ENCODE measurements at regions of chr15 and their contacts with region 1.

Region 1: DNA sequence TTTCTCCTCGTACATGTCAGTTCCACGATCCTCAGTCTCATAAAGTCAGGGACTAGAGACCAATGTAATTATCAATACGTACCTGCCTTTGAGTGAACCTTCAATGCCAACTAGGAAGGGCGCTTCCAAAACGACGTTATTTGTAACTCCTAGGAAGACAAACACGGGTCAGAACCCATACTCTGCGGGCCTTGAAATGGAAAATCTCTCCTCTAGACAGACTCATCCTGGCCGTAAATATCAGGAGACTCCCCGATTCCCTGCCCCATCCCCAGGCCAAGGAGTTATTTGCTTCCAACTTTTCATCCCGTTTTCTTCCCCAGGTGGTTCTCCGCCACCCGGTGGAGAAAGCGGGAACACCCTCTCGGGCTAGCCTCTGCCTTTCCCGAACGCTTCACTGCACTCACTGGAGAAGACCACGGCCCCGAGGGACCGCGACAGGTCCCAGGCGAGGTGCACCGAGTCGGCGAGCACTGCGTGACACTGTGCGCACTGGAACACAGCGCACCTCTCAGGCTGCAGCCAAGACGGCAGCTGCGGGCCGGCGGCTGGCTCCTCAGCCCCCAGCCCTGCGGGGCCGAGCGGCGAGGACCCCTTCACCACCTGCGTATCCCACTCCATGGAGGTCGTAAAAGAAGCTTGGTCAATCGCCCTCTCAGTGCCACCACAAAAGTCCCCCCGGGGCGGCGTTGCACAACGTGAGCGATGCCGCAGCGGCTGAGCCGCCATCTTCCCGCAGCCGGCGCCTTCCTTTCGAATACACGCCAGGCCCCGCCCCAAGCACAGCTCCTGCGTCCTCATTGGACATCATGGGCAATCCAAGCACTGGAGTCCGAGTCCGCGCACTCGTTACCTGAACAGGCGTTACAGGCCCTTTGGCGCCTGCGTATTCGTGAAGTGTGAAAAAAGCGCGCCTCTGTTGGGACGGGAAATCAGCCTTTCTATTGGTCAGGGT is at the start of gene OIP5:
- DNase-seq: peak; percentile 97 to 100 (median 99)
- H3K4me3 ChIP-seq: peak within 1 kb of the TSS; percentile 88 to 89
- H3K4me3 Mint-ChIP-seq: peak within 1 kb of the TSS; percentile 97 to 100 (median 99)
- H3K27ac ChIP-seq: peak within 1 kb of the TSS; percentile 67
- H3K27ac Mint-ChIP-seq: peak within 1 kb of the TSS; percentile 79 to 98 (median 95)
- H3K4me1 ChIP-seq: peaks cover 32% of the 10 kb centered on the region
- H3K4me1 Mint-ChIP-seq: peaks cover 16 to 45% (median 29%) of the 10 kb centered on the region in 4 donors
- H3K27me3 ChIP-seq: no peaks in the 10 kb centered on the region
- H3K27me3 Mint-ChIP-seq: no peaks in the 10 kb centered on the region
- total RNA-seq, gene OIP5: 0.52 to 0.72 TPM

Region 2: GRCh38 chr15:40807028-40807887 is 524.9 kb before region 1 on chr15 and contains the starts of genes DNAJC17 and ZFYVE19:
- CTCF ChIA-PET with region 1: no interaction called
- POLR2A ChIA-PET with region 1: interaction called, 3 read pairs
- intact Hi-C with region 1: loop called (anchors 5 kb)
- DNase-seq: peak; percentile 90 to 97 (median 91)
- H3K4me3 ChIP-seq: peak within 1 kb of the TSS; percentile 95 to 100
- H3K4me3 Mint-ChIP-seq: peak within 1 kb of the TSS; percentile 96 to 100 (median 98)
- H3K27ac ChIP-seq: peak within 1 kb of the TSS; percentile 97
- H3K27ac Mint-ChIP-seq: peak within 1 kb of the TSS; percentile 92 to 100 (median 98)
- H3K4me1 ChIP-seq: peaks cover 20% of the 10 kb centered on the region
- H3K4me1 Mint-ChIP-seq: peaks cover 15 to 33% (median 22%) of the 10 kb centered on the region in 4 donors
- H3K27me3 ChIP-seq: no peaks in the 10 kb centered on the region
- H3K27me3 Mint-ChIP-seq: no peaks in the 10 kb centered on the region
- total RNA-seq, gene DNAJC17: 40.5 to 43.9 TPM
- total RNA-seq, gene ZFYVE19: 34.1 to 35.0 TPM

Region 3: DNA sequence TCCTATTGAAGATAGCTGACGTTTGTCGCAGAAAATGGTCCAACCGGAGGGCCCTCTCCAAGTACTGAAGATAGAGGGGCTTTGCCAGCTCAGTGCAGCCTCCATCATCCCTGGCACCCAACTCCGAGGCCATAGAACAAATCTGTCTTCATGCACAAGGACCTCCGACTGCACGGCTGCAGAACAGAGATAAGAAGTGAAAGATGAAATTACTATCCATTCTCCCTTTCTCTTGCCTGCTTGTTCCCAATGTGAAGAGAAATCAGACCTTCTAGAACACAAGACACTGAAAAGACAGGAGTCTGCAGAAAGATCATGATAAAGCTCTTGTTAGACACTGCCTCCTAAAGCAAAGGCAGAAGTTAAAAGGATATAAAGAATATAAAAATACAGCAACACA is 235.9 kb before region 1 on chr15:
- CTCF ChIA-PET with region 1: no interaction called
- POLR2A ChIA-PET with region 1: no interaction called
- intact Hi-C with region 1: no loop called
- DNase-seq: no peak
- H3K4me3 ChIP-seq: no peak overlapping the region
- H3K4me3 Mint-ChIP-seq: no peak overlapping the region
- H3K27ac ChIP-seq: no peak overlapping the region
- H3K27ac Mint-ChIP-seq: no peak overlapping the region
- H3K4me1 ChIP-seq: no peaks in the 10 kb centered on the region
- H3K4me1 Mint-ChIP-seq: peaks cover 2 to 9% (median 5%) of the 10 kb centered on the region in 4 donors
- H3K27me3 ChIP-seq: no peaks in the 10 kb centered on the region
- H3K27me3 Mint-ChIP-seq: no peaks in the 10 kb centered on the region

Region 4: GRCh38 chr15:41230650-41231533 is 101.2 kb before region 1 on chr15 and contains the starts of genes CHP1 and EXD1:
- CTCF ChIA-PET with region 1: interaction called, 3 read pairs
- POLR2A ChIA-PET with region 1: interaction called, 16 read pairs
- intact Hi-C with region 1: loop called (anchors 2 kb)
- DNase-seq: peak; percentile 93 to 95 (median 94)
- H3K4me3 ChIP-seq: peak within 1 kb of the TSS; percentile 77 to 83
- H3K4me3 Mint-ChIP-seq: peak within 1 kb of the TSS; percentile 89 to 93 (median 90)
- H3K27ac ChIP-seq: peak within 1 kb of the TSS; percentile 81
- H3K27ac Mint-ChIP-seq: peak within 1 kb of the TSS; percentile 94 to 98 (median 97)
- H3K4me1 ChIP-seq: peaks cover 28% of the 10 kb centered on the region
- H3K4me1 Mint-ChIP-seq: peaks cover 21 to 42% (median 26%) of the 10 kb centered on the region in 4 donors
- H3K27me3 ChIP-seq: no peaks in the 10 kb centered on the region
- H3K27me3 Mint-ChIP-seq: peaks cover 0 to 1% of the 10 kb centered on the region in 2 donors
- total RNA-seq, gene CHP1: 26.4 to 27.1 TPM
- total RNA-seq, gene EXD1: not detected

Region 5: DNA sequence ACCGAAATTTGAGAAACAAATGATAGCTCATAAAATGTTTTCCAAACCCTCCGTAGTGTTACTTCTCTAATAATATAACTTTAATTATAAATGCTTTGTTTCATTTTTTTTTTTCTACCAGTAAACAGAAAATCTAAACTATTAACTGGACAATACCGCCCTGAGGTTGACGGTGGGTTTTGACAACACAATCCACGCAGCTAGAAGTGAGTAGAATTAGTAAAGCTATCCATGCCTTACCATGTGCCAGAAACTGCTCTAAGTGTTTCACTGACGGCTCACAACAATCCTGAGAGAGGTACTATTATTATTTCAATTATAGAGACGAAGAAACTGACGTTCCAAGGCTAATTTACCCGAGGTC is 69.8 kb after region 1 on chr15:
- CTCF ChIA-PET with region 1: no interaction called
- POLR2A ChIA-PET with region 1: no interaction called
- intact Hi-C with region 1: loop called (anchors 1 kb)
- DNase-seq: no peak
- H3K4me3 ChIP-seq: peak overlapping the region; percentile 74 to 87
- H3K4me3 Mint-ChIP-seq: peak overlapping the region; percentile 88 to 99 (median 95)
- H3K27ac ChIP-seq: peak overlapping the region; percentile 69
- H3K27ac Mint-ChIP-seq: peak overlapping the region; percentile 92 to 97 (median 96)
- H3K4me1 ChIP-seq: peaks cover 17% of the 10 kb centered on the region
- H3K4me1 Mint-ChIP-seq: peaks cover 8 to 33% (median 15%) of the 10 kb centered on the region in 4 donors
- H3K27me3 ChIP-seq: no peaks in the 10 kb centered on the region
- H3K27me3 Mint-ChIP-seq: no peaks in the 10 kb centered on the region

Region 6: GRCh38 chr15:41424808-41425207 is 92.7 kb after region 1 on chr15:
- CTCF ChIA-PET with region 1: no interaction called
- POLR2A ChIA-PET with region 1: no interaction called
- intact Hi-C with region 1: no loop called
- DNase-seq: no peak
- H3K4me3 ChIP-seq: no peak overlapping the region
- H3K4me3 Mint-ChIP-seq: peak overlapping the region in 1 of 8 donors; percentile 11
- H3K27ac ChIP-seq: no peak overlapping the region
- H3K27ac Mint-ChIP-seq: no peak overlapping the region
- H3K4me1 ChIP-seq: peaks cover 23% of the 10 kb centered on the region
- H3K4me1 Mint-ChIP-seq: peaks cover 22 to 45% (median 36%) of the 10 kb centered on the region in 4 donors
- H3K27me3 ChIP-seq: no peaks in the 10 kb centered on the region
- H3K27me3 Mint-ChIP-seq: no peaks in the 10 kb centered on the region

Region 7: GRCh38 chr15:42273102-42273899 is 941.2 kb after region 1 on chr15 and contains the starts of genes GANC and TMEM87A:
- CTCF ChIA-PET with region 1: no interaction called
- POLR2A ChIA-PET with region 1: no interaction called
- intact Hi-C with region 1: loop called (anchors 2 kb)
- DNase-seq: peak; percentile 94 to 98 (median 95)
- H3K4me3 ChIP-seq: peak within 1 kb of the TSS; percentile 73 to 98
- H3K4me3 Mint-ChIP-seq: peak within 1 kb of the TSS; percentile 92 to 100 (median 99)
- H3K27ac ChIP-seq: peak within 1 kb of the TSS; percentile 87
- H3K27ac Mint-ChIP-seq: peak within 1 kb of the TSS; percentile 95 to 100 (median 99)
- H3K4me1 ChIP-seq: peaks cover 52% of the 10 kb centered on the region
- H3K4me1 Mint-ChIP-seq: peaks cover 38 to 69% (median 53%) of the 10 kb centered on the region in 4 donors
- H3K27me3 ChIP-seq: no peaks in the 10 kb centered on the region
- H3K27me3 Mint-ChIP-seq: peaks cover 0 to 2% of the 10 kb centered on the region in 2 donors
- total RNA-seq, gene GANC: 61.7 to 63.4 TPM
- total RNA-seq, gene TMEM87A: 49.9 to 56.6 TPM

Measured in CD4-positive, alpha-beta memory T cell (primary cell).